BJ (cell line): ENCODE measurements at regions of chr18 and their contacts with region 1.

Region 1: GRCh38 chr18:73842795-73843394 is 304.7 kb downstream of the FBXO15 start:
- DNase-seq: no peak
- H3K4me3 ChIP-seq: no peak overlapping the region
- H3K27me3 ChIP-seq: no peaks in the 10 kb centered on the region
- CTCF ChIP-seq: peak; percentile 98

Region 2: DNA sequence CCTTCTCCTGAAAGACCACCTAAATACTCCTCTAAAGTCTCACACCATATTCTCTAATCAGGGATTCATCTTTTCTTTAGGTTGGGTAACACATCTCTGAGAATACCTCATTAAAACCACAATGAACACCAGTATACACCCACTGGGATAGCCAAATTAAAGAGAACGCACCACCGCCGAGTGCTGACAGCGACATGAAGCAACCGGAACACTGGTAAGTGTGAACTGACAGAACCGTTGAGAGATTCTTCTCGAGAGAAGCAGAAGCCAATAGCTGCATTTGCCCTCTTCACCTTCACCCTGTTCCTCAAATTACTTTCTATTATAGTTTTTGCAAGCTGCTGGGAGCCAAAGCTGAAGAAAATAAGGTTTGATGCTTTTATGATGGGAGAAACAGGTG is 13.7 kb before region 1 on chr18:
- CTCF ChIA-PET with region 1: interaction called, 20 read pairs
- POLR2A ChIA-PET with region 1: no interaction called
- DNase-seq: no peak
- H3K4me3 ChIP-seq: no peak overlapping the region
- H3K27me3 ChIP-seq: no peaks in the 10 kb centered on the region; the same call in 1 of the 2 replicates
- CTCF ChIP-seq: no peak

Region 3: GRCh38 chr18:73852789-73853549 is 10.1 kb after region 1 on chr18:
- CTCF ChIA-PET with region 1: interaction called, 10 read pairs
- POLR2A ChIA-PET with region 1: no interaction called
- DNase-seq: no peak
- H3K4me3 ChIP-seq: no peak overlapping the region
- H3K27me3 ChIP-seq: no peaks in the 10 kb centered on the region
- CTCF ChIP-seq: no peak

Region 4: GRCh38 chr18:73891572-73892421 is 48.9 kb after region 1 on chr18:
- CTCF ChIA-PET with region 1: no interaction called
- POLR2A ChIA-PET with region 1: no interaction called
- DNase-seq: no peak
- H3K4me3 ChIP-seq: no peak overlapping the region
- H3K27me3 ChIP-seq: no peaks in the 10 kb centered on the region
- CTCF ChIP-seq: peak; percentile 20; the same call in 1 of the 2 replicates

Region 5: DNA sequence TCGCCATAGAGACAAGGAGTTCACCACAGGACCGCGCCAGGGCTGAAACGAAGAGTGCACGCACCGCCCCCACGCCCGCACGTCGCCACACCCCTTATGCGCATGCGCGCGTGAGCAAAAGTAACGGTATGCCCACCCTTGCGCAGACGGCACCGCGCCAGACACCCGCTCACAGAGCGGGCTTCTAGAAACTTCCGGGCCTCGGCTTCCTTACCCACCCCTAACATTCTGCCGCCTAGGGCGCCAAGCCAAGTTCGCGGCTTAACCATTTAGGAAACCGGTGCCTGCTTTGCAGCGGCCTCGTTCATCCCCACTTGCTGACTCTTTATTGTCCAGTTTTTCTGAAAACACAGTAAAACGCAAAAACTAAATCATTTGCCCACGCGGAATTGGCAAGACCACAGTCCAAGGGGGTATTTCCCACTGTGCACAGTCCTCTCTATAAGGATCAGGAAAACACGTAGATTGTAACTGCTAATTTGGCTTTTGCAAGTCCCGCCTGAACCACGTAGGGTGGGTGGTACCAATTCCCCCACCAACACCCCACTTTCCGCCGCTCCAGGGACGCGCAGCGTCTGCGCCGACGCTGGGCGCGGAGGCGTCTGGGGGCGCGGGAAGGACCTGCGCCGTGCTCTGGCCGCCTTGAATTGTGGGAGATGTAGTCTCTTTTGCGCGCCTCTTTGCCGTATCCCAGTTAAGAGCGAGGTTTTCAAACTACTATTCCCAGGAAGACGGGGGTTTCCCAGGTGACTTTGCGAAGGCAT is 305.1 kb after region 1 on chr18 and contains the starts of genes FBXO15 and TIMM21:
- CTCF ChIA-PET with region 1: no interaction called
- POLR2A ChIA-PET with region 1: no interaction called
- DNase-seq: peak; percentile 90
- H3K4me3 ChIP-seq: peak within 1 kb of the TSS; percentile 85
- H3K27me3 ChIP-seq: no peaks in the 10 kb centered on the region
- CTCF ChIP-seq: no peak
- polyA plus RNA-seq, gene FBXO15: 0.75 and 0.82 TPM in 2 replicates
- polyA plus RNA-seq, gene TIMM21: 21.2 and 49.4 TPM in 2 replicates